Ovary (tissue), 10 donors: ENCODE measurements at regions of chr18 and their contacts with region 1.

Region 1: DNA sequence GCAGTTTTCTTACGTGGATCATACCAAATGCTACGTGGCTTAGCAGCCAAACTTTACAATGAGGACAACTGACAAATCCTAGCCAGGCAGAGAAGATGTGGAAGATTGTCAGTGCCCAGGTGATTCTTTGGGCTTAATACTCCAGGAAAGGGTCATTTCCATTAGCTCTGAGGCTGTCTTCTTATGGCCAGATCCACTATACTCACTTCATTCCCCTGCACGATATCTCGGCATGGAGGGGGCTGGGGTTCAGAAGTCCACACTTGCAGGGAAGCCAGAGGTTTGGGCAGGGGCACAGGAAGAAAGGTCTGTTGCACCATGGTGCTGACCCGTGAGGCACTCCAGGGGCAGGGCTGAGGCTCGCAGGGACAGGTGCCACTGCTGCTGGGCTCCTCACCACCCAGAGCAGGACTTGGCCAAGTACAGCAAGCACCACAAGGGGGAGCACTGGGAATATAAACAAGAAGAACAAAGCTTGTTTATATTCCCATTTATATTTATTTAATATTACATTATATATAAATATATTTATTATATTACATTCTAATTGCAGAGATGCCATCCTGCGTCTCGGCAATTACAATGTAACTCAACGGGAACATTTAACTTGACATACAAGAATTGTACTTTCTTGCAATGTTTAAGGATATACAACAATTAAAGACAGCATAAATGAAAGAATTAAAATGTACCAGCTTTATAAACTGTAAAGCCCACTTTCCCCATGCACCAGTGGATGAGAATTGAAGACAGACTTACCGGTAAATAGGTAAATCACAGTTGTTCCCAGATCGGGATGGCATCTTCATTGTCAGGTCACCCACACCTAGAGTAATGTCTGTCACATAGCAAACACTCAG is 27.2 kb downstream of the CLUL1 start:
- DNase-seq: peak; percentile 51 to 68 (median 62)
- H3K4me3 ChIP-seq: no peak overlapping the region
- H3K27ac ChIP-seq: no peak overlapping the region
- H3K4me1 ChIP-seq: no peaks in the 10 kb centered on the region
- H3K27me3 ChIP-seq: no peaks in the 10 kb centered on the region
- CTCF ChIP-seq: peak in 2 of 3 donors; percentile 12 to 15
- EP300 ChIP-seq: no peak
- POLR2A ChIP-seq: no peak

Region 2: DNA sequence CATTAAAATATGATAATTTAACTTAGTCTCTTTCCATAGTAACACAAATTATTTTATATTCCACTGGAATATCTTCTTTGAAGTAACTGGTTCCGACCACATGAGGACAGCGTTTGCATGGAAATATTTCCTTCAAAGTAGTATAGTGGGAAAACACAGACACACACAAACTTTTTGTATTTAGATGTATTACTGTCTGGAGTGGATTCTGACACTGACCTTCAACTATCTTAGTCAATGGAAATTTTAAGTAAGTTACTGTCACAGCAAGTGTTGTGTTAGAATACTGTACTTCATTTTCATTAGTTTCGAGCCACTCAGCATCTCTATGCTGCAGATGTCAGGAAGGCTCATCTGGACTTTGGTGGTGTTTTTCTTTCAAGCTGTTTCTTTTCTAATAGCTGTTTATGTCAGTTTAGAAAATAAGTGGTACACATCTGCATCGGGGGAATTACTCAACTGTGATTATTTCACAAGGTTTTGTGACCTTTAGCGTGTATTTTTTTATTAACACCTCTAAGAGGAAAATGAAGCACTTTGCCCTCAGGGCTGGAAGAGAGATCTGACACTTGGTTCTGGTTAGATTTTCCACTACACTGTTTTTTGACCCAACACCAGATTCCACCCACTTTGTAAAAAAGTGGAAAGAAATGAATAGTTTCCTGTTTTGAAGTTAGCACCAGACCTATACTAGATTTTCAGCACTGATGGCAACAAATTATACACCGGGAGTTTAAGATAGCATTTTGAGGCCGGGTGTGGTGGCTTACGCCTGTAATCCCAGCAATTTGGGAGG is 337.3 kb before region 1 on chr18:
- intact Hi-C with region 1: loop called (anchors 5 to 10 kb)
- DNase-seq: no peak
- H3K4me3 ChIP-seq: no peak overlapping the region
- H3K27ac ChIP-seq: no peak overlapping the region
- H3K4me1 ChIP-seq: no peaks in the 10 kb centered on the region
- H3K27me3 ChIP-seq: no peaks in the 10 kb centered on the region
- CTCF ChIP-seq: peak in 2 of 3 donors; percentile 37 to 67
- EP300 ChIP-seq: no peak
- POLR2A ChIP-seq: no peak

Region 3: DNA sequence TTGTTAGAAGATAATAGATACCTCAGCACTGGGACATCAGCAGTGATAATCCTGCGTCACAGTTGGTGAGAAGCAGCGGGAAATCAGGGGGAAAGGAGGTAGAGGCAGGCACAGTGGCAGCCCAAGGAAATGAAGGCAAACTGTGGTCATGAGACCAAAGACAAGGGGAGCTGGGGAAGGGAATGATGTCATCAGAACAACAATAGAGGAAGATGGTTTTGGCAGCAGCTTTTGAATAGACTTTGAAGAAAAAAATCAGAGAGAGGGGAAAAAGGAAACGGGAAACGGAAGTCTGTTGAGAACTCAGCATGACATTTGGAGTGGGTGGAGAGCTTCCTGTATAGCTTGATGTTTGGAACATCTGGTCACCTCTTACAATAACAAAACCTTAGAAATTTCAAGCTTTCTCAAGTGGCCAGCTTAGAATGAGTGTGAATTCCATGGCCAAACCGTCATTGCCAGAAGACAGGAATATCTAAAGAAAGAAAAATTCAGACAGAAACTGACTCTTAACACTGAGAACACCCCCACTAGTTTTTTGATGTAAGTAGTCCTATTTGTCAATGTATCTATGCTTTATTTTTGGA is 206.4 kb after region 1 on chr18:
- intact Hi-C with region 1: loop called (anchors 5 to 10 kb)
- DNase-seq: no peak
- H3K4me3 ChIP-seq: no peak overlapping the region
- H3K27ac ChIP-seq: no peak overlapping the region
- H3K4me1 ChIP-seq: peaks cover 3% of the 10 kb centered on the region
- H3K27me3 ChIP-seq: no peaks in the 10 kb centered on the region
- CTCF ChIP-seq: no peak
- EP300 ChIP-seq: peak; percentile 6
- POLR2A ChIP-seq: no peak

Region 4: GRCh38 chr18:839224-840022 is 215.4 kb after region 1 on chr18:
- intact Hi-C with region 1: loop called (anchors 5 to 10 kb)
- DNase-seq: peak; percentile 75 to 91 (median 88)
- H3K4me3 ChIP-seq: no peak overlapping the region
- H3K27ac ChIP-seq: no peak overlapping the region
- H3K4me1 ChIP-seq: peaks cover 5% of the 10 kb centered on the region
- H3K27me3 ChIP-seq: no peaks in the 10 kb centered on the region
- CTCF ChIP-seq: peak; percentile 67 to 80 (median 78)
- EP300 ChIP-seq: no peak
- POLR2A ChIP-seq: no peak